B cell (primary cell): ENCODE measurements at regions of chr21 and their contacts with region 1.

Region 1: GRCh38 chr21:23853796-23854379 is 1753.4 kb downstream of the MRPL39 start:
- DNase-seq: peak; percentile 75
- ATAC-seq: peak; percentile 68
- H3K4me3 ChIP-seq: no peak overlapping the region
- H3K4me3 Mint-ChIP-seq: no peak overlapping the region
- H3K27ac ChIP-seq: no peak overlapping the region
- H3K27ac Mint-ChIP-seq: no peak overlapping the region
- H3K4me1 ChIP-seq: peaks cover 10 to 14% of the 10 kb centered on the region in 2 donors
- H3K4me1 Mint-ChIP-seq: peaks cover 12% of the 10 kb centered on the region
- H3K27me3 ChIP-seq: no peaks in the 10 kb centered on the region
- H3K27me3 Mint-ChIP-seq: no peaks in the 10 kb centered on the region
- CTCF ChIP-seq: peak; percentile 80

Region 2: DNA sequence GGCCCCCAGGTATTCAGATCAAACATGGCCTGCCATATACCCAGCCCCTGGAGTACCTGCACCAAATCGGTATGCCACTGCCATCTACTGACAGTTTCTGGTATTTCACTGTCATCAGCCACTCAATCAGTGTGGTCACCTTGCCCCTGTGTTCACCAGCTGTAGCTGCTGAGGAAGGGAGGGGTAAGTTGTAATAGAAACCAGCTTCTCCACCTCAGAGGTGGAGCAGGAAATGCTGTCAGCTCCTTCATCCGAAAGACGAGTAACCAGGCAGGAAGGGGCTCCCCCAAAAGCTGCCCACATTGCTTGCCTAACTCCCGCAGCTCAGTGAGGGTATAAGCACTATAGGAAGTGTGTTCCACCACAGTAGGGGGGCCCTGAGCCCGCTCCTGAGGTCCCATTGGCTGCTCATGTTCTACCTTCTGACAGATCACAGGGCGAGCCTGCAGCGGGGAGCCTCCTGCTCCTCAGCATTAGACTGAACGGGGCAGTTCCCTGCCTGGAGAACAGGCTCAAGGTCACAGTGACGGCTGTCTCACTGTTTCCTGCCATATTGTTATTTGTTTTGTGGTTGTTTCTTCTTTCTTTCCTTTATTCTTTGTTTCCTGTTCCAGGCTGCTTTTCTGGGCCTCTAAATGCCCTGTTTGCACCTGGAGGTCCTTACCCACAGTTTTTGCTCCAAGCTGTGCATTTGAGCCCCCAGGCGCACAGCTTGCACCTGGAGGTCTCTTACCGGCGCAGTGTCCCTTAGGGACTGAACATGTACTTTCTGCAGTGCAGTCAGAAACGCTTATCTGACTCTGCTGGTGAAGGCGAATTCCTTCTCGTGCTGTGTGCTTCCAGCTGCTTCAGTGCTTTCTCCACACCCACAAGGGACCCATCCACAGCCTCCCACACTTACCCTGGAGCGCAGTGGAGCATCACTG is 115.1 kb after region 1 on chr21:
- CTCF ChIA-PET with region 1: interaction called, 71 read pairs
- POLR2A ChIA-PET with region 1: no interaction called
- intact Hi-C with region 1: loop called (anchors 1 kb)
- DNase-seq: peak; percentile 94
- ATAC-seq: peak; percentile 90
- H3K4me3 ChIP-seq: peak overlapping the region; percentile 13 to 63 (median 35)
- H3K4me3 Mint-ChIP-seq: peak overlapping the region; percentile 86
- H3K27ac ChIP-seq: peak overlapping the region; percentile 62 to 66
- H3K27ac Mint-ChIP-seq: peak overlapping the region; percentile 80
- H3K4me1 ChIP-seq: peaks cover 16 to 22% of the 10 kb centered on the region in 2 donors
- H3K4me1 Mint-ChIP-seq: peaks cover 23% of the 10 kb centered on the region
- H3K27me3 ChIP-seq: no peaks in the 10 kb centered on the region
- H3K27me3 Mint-ChIP-seq: no peaks in the 10 kb centered on the region
- CTCF ChIP-seq: peak; percentile 87

Region 3: GRCh38 chr21:24045775-24046215 is 191.9 kb after region 1 on chr21:
- CTCF ChIA-PET with region 1: interaction called, 10 read pairs
- POLR2A ChIA-PET with region 1: no interaction called
- intact Hi-C with region 1: loop called (anchors 10 kb)
- DNase-seq: peak; percentile 36
- ATAC-seq: no peak
- H3K4me3 ChIP-seq: no peak overlapping the region
- H3K4me3 Mint-ChIP-seq: peak overlapping the region; percentile 48
- H3K27ac ChIP-seq: peak overlapping the region in 1 of 2 donors; percentile 38
- H3K27ac Mint-ChIP-seq: peak overlapping the region; percentile 2
- H3K4me1 ChIP-seq: peaks cover 45 to 60% of the 10 kb centered on the region in 2 donors
- H3K4me1 Mint-ChIP-seq: peaks cover 57% of the 10 kb centered on the region
- H3K27me3 ChIP-seq: no peaks in the 10 kb centered on the region
- H3K27me3 Mint-ChIP-seq: no peaks in the 10 kb centered on the region
- CTCF ChIP-seq: peak; percentile 34

Region 4: GRCh38 chr21:24076179-24076578 is 222.3 kb after region 1 on chr21:
- CTCF ChIA-PET with region 1: interaction called, 12 read pairs
- POLR2A ChIA-PET with region 1: no interaction called
- intact Hi-C with region 1: no loop called
- DNase-seq: peak; percentile 67
- ATAC-seq: no peak
- H3K4me3 ChIP-seq: no peak overlapping the region
- H3K4me3 Mint-ChIP-seq: no peak overlapping the region
- H3K27ac ChIP-seq: no peak overlapping the region
- H3K27ac Mint-ChIP-seq: no peak overlapping the region
- H3K4me1 ChIP-seq: peaks cover 0 to 14% of the 10 kb centered on the region in 2 donors
- H3K4me1 Mint-ChIP-seq: peaks cover 15% of the 10 kb centered on the region
- H3K27me3 ChIP-seq: no peaks in the 10 kb centered on the region
- H3K27me3 Mint-ChIP-seq: no peaks in the 10 kb centered on the region
- CTCF ChIP-seq: peak; percentile 68

Region 5: GRCh38 chr21:24514081-24514733 is 660.3 kb after region 1 on chr21:
- CTCF ChIA-PET with region 1: interaction called, 3 read pairs
- POLR2A ChIA-PET with region 1: no interaction called
- intact Hi-C with region 1: loop called (anchors 2 kb)
- DNase-seq: peak; percentile 18
- ATAC-seq: no peak
- H3K4me3 ChIP-seq: no peak overlapping the region
- H3K4me3 Mint-ChIP-seq: no peak overlapping the region
- H3K27ac ChIP-seq: no peak overlapping the region
- H3K27ac Mint-ChIP-seq: no peak overlapping the region
- H3K4me1 ChIP-seq: no peaks in the 10 kb centered on the region
- H3K4me1 Mint-ChIP-seq: no peaks in the 10 kb centered on the region
- H3K27me3 ChIP-seq: no peaks in the 10 kb centered on the region
- H3K27me3 Mint-ChIP-seq: no peaks in the 10 kb centered on the region
- CTCF ChIP-seq: peak; percentile 72

Region 6: DNA sequence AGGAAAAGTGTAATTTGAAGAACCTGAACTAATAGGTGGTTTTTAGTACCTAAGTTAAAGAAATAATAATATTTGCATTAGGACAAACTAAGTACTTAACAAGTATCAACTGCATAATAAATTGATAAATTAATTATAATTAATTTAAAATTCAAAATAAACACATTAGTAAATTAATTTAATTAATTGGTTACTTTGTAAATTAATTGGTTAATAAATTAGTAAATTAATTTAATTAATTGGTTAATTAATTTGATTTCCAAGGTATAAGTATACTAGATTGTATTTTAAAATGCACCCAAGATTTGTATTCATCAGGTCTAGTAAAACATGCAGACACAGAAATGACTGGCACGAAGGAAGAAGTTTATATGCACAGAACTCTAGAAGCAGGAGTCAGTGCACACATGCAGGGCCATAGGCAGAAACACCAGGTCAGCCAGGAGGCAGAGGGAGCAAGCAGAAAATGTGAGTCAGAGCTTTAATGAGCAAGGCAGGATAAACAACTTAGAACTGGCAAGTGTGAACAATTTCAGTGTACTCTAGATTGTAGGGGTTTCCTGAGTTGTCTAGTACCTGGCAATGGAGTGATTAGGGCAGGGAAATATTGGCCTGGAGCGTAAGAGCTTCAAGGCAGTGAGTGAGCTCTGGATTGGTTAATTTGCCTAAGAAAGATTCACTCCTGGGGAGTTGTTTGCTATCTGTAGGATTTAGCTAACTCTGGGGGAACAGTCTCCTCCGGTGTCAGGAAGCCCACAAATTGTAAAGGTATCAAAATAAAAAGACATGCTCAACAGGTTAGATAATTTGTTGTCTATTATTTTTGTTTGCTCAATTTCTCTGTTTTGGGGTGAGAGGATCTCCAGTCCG is 1087.7 kb after region 1 on chr21:
- CTCF ChIA-PET with region 1: no interaction called
- POLR2A ChIA-PET with region 1: no interaction called
- intact Hi-C with region 1: no loop called
- DNase-seq: no peak
- ATAC-seq: no peak
- H3K4me3 ChIP-seq: no peak overlapping the region
- H3K4me3 Mint-ChIP-seq: no peak overlapping the region
- H3K27ac ChIP-seq: no peak overlapping the region
- H3K27ac Mint-ChIP-seq: no peak overlapping the region
- H3K4me1 ChIP-seq: no peaks in the 10 kb centered on the region
- H3K4me1 Mint-ChIP-seq: no peaks in the 10 kb centered on the region
- H3K27me3 ChIP-seq: no peaks in the 10 kb centered on the region
- H3K27me3 Mint-ChIP-seq: no peaks in the 10 kb centered on the region
- CTCF ChIP-seq: no peak

Region 7: DNA sequence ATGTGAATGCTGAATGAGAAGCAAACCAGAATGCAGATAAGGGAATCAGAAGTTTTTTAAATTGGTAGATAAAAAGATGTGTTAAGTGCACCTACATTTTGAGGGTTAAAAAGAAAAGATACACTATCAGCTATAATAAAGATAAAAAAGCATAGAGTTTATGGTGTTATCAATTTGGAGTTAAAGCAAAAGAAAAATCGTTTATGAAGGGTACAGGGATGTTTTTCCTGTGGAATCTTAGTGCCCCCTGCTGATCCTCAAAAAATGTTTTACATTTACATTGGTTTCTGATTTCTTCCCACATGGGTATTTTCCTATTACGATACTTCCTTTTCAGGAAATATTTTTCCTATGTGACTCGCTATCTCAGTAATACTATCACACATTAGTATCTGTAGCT is 1459.9 kb after region 1 on chr21:
- CTCF ChIA-PET with region 1: no interaction called
- POLR2A ChIA-PET with region 1: no interaction called
- intact Hi-C with region 1: loop called (anchors 5 kb)
- DNase-seq: peak; percentile 58
- ATAC-seq: no peak
- H3K4me3 ChIP-seq: peak overlapping the region in 1 of 5 experiments; percentile 13
- H3K4me3 Mint-ChIP-seq: peak overlapping the region; percentile 42
- H3K27ac ChIP-seq: no peak overlapping the region
- H3K27ac Mint-ChIP-seq: no peak overlapping the region
- H3K4me1 ChIP-seq: peaks cover 3 to 10% of the 10 kb centered on the region in 2 donors
- H3K4me1 Mint-ChIP-seq: peaks cover 13% of the 10 kb centered on the region
- H3K27me3 ChIP-seq: no peaks in the 10 kb centered on the region
- H3K27me3 Mint-ChIP-seq: no peaks in the 10 kb centered on the region
- CTCF ChIP-seq: peak; percentile 76

Region 8: DNA sequence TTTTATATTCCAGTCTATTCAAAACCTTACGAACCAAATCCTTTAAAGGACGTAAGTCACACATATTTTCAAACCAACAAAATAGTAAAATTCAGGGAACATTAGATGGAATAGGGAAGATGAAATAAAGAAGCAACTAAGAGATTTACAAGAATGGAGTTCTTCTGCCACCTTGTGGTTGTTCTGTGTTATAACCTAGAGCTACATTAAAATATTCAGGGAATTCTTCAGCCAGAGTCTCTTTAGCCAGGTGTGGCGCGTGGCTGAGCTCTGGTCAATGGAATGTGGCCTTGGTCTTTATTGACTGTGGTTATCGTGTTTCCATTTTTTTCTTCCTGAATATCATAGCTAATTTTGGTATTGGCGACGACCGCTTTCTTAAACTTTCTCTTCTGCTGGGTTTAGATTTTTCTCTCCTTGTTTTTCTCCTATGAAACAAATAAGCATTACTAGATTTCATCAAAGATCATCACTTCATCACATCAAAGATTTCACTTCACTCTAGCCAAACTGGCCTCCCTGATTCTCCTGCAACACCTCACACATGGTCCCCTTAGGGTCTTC is 1532.1 kb after region 1 on chr21:
- CTCF ChIA-PET with region 1: interaction called, 18 read pairs
- POLR2A ChIA-PET with region 1: no interaction called
- intact Hi-C with region 1: loop called (anchors 1 kb)
- DNase-seq: peak; percentile 69
- ATAC-seq: peak; percentile 43
- H3K4me3 ChIP-seq: no peak overlapping the region
- H3K4me3 Mint-ChIP-seq: no peak overlapping the region
- H3K27ac ChIP-seq: no peak overlapping the region
- H3K27ac Mint-ChIP-seq: no peak overlapping the region
- H3K4me1 ChIP-seq: no peaks in the 10 kb centered on the region
- H3K4me1 Mint-ChIP-seq: peaks cover 6% of the 10 kb centered on the region
- H3K27me3 ChIP-seq: no peaks in the 10 kb centered on the region
- H3K27me3 Mint-ChIP-seq: no peaks in the 10 kb centered on the region
- CTCF ChIP-seq: peak; percentile 99